Ovary (tissue), 10 donors: ENCODE measurements at regions of chr16 and their contacts with region 1.

Region 1: DNA sequence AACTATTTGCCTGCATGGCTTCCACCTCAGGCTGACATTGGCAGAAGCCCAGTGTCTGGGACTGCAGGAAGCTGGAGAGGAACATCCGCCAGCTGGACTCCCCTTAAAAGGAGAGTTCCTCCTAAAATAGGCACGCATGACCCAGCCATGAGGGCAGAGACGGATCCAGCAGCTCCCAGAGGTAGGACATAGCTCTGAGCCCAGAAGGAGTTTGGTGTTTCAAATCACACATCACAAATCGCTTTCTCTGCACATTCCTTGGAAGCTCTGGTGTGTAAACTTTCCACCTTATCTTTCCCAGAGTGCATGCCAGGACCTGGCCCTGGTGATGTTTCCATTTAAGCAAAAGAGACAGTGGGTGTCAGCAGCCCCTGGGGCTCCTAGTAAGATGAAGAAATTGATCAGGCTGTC is 231.1 kb upstream of the CDH5 start:
- DNase-seq: peak; percentile 50 to 86 (median 78)
- H3K4me3 ChIP-seq: no peak overlapping the region
- H3K27ac ChIP-seq: peak overlapping the region in 1 of 2 donors; percentile 44
- H3K4me1 ChIP-seq: peaks cover 17% of the 10 kb centered on the region
- H3K27me3 ChIP-seq: no peaks in the 10 kb centered on the region
- CTCF ChIP-seq: no peak
- EP300 ChIP-seq: no peak
- POLR2A ChIP-seq: no peak

Region 2: GRCh38 chr16:64762211-64762610 is 1373.2 kb before region 1 on chr16:
- intact Hi-C with region 1: no loop called
- DNase-seq: no peak
- H3K4me3 ChIP-seq: no peak overlapping the region
- H3K27ac ChIP-seq: no peak overlapping the region
- H3K4me1 ChIP-seq: no peaks in the 10 kb centered on the region
- H3K27me3 ChIP-seq: no peaks in the 10 kb centered on the region
- CTCF ChIP-seq: no peak
- EP300 ChIP-seq: no peak
- POLR2A ChIP-seq: no peak

Region 3: DNA sequence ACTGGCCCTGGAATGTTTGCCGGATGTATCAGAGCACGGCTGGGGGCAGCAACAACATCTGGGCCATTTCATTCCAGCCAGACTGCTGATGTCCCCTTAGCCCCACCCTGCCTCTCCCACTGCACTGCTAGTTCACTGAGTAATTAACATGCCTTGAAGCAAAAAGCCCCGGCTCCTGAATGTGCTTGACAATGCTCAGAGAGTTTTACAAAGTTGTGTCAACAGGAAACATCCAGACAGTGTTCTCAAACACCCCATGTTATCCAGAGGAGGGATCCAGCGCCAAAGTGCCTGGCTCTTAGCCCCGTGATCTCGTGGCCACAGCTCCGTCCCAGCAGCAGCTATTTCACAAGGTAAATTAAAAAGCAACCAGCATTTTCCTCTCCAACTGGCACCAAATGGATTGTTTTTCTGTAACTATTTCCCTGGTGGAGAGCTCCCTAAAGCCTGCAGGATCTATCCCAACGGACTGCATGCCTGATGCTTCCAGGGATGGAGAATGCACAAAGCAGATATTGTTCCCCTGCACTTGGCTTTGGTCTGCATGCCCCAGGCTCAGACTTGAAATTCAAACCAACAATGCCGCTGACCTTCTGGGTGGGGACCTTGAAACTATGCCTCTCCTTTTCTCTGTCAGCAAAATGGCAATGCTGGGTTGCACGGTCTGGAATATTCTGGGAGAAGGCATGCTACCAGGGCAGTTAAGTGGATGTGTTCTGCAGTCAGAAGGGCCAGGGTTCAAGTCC is 115.4 kb after region 1 on chr16:
- intact Hi-C with region 1: loop called in 1 of 4 experiments (anchors 10 kb)
- DNase-seq: peak; percentile 73 to 86 (median 77)
- H3K4me3 ChIP-seq: no peak overlapping the region
- H3K27ac ChIP-seq: peak overlapping the region in 1 of 2 donors; percentile 61
- H3K4me1 ChIP-seq: peaks cover 3% of the 10 kb centered on the region
- H3K27me3 ChIP-seq: no peaks in the 10 kb centered on the region
- CTCF ChIP-seq: no peak
- EP300 ChIP-seq: no peak
- POLR2A ChIP-seq: no peak

Region 4: DNA sequence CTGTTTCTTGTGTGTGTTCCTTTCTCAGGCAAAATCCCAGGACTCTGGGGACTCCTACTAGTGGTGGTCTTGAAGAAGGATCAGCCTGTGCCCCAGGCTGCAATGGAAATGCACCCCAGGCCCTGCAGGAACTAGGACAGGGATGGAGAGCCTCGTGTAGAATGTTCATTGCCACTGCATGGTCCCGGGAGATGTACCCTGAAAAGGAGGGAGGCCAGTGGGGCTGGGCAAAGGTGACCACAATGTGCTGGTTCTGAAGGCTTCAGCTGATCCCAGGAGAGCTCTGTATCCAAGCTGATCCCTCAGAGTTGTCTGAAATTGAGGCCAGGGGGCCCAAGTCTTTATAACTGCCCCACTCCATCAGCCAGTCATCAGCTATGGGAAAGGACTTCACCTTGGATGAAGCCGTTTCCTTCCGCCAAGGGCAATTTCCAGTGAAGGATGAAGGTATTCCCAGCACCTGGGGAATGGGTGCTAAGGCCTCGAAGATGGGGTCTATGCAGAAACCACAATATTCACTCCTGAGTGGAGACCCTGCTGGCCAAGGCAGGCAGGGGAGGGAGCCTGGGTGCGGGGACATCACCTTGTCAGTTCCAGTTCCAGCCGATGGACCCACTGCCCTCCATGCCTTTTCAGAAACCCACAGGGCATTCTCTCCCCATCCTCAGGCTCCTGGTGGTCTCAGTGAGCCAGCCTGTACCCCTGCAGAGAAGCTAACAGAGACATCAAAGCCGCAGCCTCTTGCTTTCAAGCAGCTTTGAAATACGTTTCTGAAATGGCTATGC is 171.1 kb after region 1 on chr16:
- intact Hi-C with region 1: no loop called
- DNase-seq: no peak
- H3K4me3 ChIP-seq: no peak overlapping the region
- H3K27ac ChIP-seq: no peak overlapping the region
- H3K4me1 ChIP-seq: no peaks in the 10 kb centered on the region
- H3K27me3 ChIP-seq: no peaks in the 10 kb centered on the region
- CTCF ChIP-seq: no peak
- EP300 ChIP-seq: no peak
- POLR2A ChIP-seq: no peak